ENCODE measurements at regions of chr4 and their contacts with region 1.

Region 1: GRCh38 chr4:69689599-69689998 is 36.6 kb upstream of the UGT2A1 start:
- DNase-seq: peak; percentile 72
- H3K4me3 ChIP-seq: no peak overlapping the region
- H3K27ac ChIP-seq: peak overlapping the region; percentile 48
- H3K4me1 ChIP-seq: peaks cover 9% of the 10 kb centered on the region
- H3K27me3 ChIP-seq: no peaks in the 10 kb centered on the region
- CTCF ChIP-seq: peak in 1 of 2 donors; percentile 31
- POLR2A ChIP-seq: no peak

Region 2: GRCh38 chr4:69718396-69719253 is 29.0 kb after region 1 on chr4:
- CTCF ChIA-PET with region 1: interaction called, 5 read pairs
- POLR2A ChIA-PET with region 1: no interaction called
- dilution Hi-C with region 1: no loop called
- intact Hi-C with region 1: loop called (anchors 1 kb)
- DNase-seq: peak; percentile 83
- H3K4me3 ChIP-seq: no peak overlapping the region
- H3K27ac ChIP-seq: peak overlapping the region; percentile 80
- H3K4me1 ChIP-seq: peaks cover 56% of the 10 kb centered on the region
- H3K27me3 ChIP-seq: no peaks in the 10 kb centered on the region
- CTCF ChIP-seq: no peak
- POLR2A ChIP-seq: peak; percentile 4

Region 3: DNA sequence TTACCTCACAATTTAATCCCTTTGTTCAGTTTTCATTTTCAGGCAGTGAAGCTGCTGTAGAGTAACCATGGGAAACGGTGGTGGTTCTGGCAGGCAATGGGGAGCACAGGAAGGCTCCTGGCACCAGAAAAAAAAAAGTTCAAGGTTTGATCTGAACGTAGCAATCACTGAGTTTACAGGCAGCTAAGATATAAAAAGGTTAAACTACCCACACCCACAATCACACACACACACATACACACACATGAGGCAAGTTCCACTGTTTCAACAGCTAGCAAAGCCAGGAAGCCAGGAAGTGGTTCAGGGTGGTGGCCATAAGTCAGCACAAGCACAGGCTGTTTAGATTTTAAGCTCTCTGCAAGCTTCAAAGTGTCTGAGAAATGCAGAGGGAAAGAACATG is 70.9 kb after region 1 on chr4 and contains the start of gene SULT1B1:
- CTCF ChIA-PET with region 1: interaction called, 16 read pairs
- POLR2A ChIA-PET with region 1: no interaction called
- dilution Hi-C with region 1: no loop called
- intact Hi-C with region 1: loop called (anchors 2 kb)
- DNase-seq: peak; percentile 89
- H3K4me3 ChIP-seq: peak within 1 kb of the TSS; percentile 21 to 79 (median 27)
- H3K27ac ChIP-seq: peak within 1 kb of the TSS; percentile 95
- H3K4me1 ChIP-seq: peaks cover 69% of the 10 kb centered on the region
- H3K27me3 ChIP-seq: no peaks in the 10 kb centered on the region
- CTCF ChIP-seq: no peak
- POLR2A ChIP-seq: no peak
- total RNA-seq, gene SULT1B1: 59.5 and 68.2 TPM in 2 replicates

Region 4: GRCh38 chr4:69823481-69824186 is 134.0 kb after region 1 on chr4:
- CTCF ChIA-PET with region 1: interaction called, 63 read pairs
- POLR2A ChIA-PET with region 1: no interaction called
- dilution Hi-C with region 1: no loop called
- intact Hi-C with region 1: loop called (anchors 1 kb)
- DNase-seq: peak; percentile 76
- H3K4me3 ChIP-seq: no peak overlapping the region
- H3K27ac ChIP-seq: peak overlapping the region; percentile 22
- H3K4me1 ChIP-seq: peaks cover 11% of the 10 kb centered on the region
- H3K27me3 ChIP-seq: no peaks in the 10 kb centered on the region
- CTCF ChIP-seq: peak; percentile 57 to 59
- POLR2A ChIP-seq: no peak

Region 5: DNA sequence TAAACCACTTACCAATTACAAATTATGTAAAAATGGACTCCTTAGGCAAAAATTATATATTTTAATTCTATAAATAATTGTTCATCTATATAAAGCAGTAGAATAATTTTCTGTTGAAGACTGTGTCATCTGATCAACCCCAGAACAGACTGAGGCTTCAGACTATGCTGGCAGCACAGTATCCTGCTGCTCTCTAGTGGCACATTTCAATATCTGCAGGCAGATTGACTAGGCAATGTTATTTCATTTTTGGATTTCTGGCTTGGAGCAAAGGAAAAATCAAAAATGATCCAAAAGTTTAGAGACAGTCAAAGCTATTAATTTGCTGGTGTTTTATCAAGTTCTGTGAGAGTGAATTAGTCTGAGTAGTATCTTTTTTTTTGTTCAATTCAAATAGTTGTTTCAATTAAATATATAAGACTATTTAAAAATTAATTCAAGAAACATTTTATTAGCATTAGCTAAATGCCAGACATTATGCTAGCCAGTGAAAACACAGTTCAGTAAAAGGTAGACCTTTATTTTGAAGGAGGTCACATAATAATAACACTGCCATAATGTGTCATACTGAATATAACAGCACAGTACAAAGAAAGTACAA is 191.7 kb after region 1 on chr4:
- CTCF ChIA-PET with region 1: interaction called, 105 read pairs
- POLR2A ChIA-PET with region 1: no interaction called
- dilution Hi-C with region 1: no loop called
- intact Hi-C with region 1: loop called (anchors 1 kb)
- DNase-seq: peak; percentile 61
- H3K4me3 ChIP-seq: no peak overlapping the region
- H3K27ac ChIP-seq: peak overlapping the region; percentile 17
- H3K4me1 ChIP-seq: peaks cover 6% of the 10 kb centered on the region
- H3K27me3 ChIP-seq: no peaks in the 10 kb centered on the region
- CTCF ChIP-seq: peak; percentile 70 to 81
- POLR2A ChIP-seq: no peak

Region 6: GRCh38 chr4:70505151-70505748 is 815.7 kb after region 1 on chr4:
- CTCF ChIA-PET with region 1: interaction called, 6 read pairs
- POLR2A ChIA-PET with region 1: no interaction called
- dilution Hi-C with region 1: no loop called
- intact Hi-C with region 1: loop called (anchors 1 kb)
- DNase-seq: peak; percentile 54
- H3K4me3 ChIP-seq: no peak overlapping the region
- H3K27ac ChIP-seq: no peak overlapping the region
- H3K4me1 ChIP-seq: no peaks in the 10 kb centered on the region
- H3K27me3 ChIP-seq: peaks cover 0 to 1% of the 10 kb centered on the region in 2 experiments
- CTCF ChIP-seq: peak; percentile 90 to 94
- POLR2A ChIP-seq: no peak